ENCODE measurements at regions of chr17 and their contacts with region 1.

Region 1: DNA sequence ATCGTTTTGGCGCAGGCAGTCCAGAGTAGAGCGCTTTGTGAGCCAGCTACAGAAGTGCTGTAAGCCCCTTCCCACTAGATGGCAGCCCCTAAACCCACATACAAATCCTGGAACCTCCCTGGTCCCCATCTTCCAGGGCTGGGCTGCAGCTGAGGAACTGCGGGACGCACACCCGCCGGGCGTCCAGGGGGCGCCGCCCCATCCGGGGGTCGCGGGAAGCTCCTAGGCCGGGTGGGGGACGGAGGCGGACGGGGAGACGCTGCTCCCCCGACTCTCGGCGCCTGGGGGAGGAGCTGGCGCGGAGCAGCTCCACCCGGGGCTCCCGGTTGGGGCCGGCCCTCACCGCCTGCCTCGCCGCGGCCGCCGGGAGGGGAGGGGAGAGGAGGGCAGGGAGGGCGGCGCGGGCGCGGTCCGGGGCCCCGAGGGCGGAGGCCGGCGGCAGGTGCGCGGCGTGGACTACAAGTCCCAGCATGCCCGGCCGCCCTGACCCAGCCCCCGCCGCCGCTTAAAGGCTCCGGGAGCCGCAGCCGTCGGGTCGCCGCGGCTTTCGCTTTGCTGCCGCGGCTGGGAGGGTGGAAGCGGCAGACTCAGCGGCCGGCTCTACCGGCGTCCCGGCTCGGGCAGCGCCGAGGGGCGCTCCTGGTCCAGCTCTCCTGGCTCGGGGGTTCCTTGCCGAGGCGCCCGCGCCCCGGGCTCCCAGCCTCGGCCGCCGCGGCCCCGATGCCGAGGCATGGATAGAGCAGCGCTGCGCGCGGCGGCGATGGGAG is at the start of gene KSR1:
- DNase-seq: peak; percentile 41 to 63 (median 62)
- H3K4me3 ChIP-seq: peak within 1 kb of the TSS; percentile 54 to 89 (median 83)
- H3K4me3 Mint-ChIP-seq: peak within 1 kb of the TSS; percentile 93 to 97
- H3K27ac ChIP-seq: peak within 1 kb of the TSS; percentile 38 to 81
- H3K27ac Mint-ChIP-seq: peak within 1 kb of the TSS; percentile 73 to 90 (median 86)
- H3K4me1 ChIP-seq: peaks cover 19 to 23% of the 10 kb centered on the region in 2 donors
- H3K4me1 Mint-ChIP-seq: peaks cover 38% of the 10 kb centered on the region
- H3K27me3 ChIP-seq: no peaks in the 10 kb centered on the region
- H3K27me3 Mint-ChIP-seq: peaks cover 2 to 8% (median 5%) of the 10 kb centered on the region in 3 donors
- CTCF ChIP-seq: no peak
- polyA plus RNA-seq, gene KSR1: 1.2 to 111 (median 4.2) TPM

Region 2: DNA sequence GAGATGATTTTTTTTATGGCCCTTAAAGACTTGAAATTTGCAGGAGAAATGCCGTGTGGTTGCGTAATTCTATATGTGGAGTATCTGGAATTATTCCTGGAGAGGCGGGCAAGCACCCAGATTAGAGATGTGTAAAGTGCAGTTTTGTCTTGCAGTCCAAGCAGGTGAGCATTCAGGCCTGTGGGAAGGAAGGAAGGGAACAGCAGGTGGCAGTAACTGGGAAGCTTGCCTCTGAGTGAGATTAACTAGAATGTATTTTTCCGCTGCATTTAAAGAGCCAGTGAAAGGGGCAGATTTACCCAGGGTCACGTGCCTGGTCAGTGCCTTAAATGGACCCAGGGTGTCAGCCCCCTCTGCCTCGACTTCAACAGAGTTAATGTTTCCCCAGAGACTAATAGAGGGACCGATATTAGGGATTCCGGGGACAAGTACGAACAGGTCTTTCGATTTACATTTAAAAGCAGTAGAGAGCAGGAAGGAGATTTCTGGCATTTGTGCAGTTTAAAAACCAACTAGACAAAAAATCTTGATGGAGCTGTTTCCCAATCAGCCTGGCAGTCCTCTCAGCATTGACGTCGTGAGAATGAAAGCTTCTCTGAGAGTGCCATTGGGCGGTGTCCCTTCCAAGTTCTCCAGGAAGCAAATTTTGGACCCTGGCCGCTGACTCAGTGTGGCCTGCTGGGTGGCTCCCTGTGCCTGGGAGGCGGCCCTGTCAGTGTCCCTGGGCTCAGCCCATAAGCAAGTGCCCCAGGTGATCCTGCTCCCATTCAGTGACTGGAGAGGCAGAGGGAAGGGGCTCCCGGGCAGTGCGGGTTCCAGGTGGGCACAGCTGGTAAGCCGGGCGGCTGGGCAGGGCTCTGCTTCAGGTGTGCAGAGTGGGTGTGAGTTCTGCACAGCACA is 38.3 kb after region 1 on chr17:
- intact Hi-C with region 1: loop called in 1 of 2 experiments (anchors 5 kb)
- DNase-seq: peak; percentile 76 to 83 (median 78)
- H3K4me3 ChIP-seq: peak overlapping the region in 1 of 3 experiments; percentile 34
- H3K4me3 Mint-ChIP-seq: peak overlapping the region in 1 of 2 donors; percentile 75
- H3K27ac ChIP-seq: peak overlapping the region; percentile 77 to 81
- H3K27ac Mint-ChIP-seq: peak overlapping the region; percentile 91 to 96 (median 94)
- H3K4me1 ChIP-seq: peaks cover 49 to 62% of the 10 kb centered on the region in 2 donors
- H3K4me1 Mint-ChIP-seq: peaks cover 73% of the 10 kb centered on the region
- H3K27me3 ChIP-seq: no peaks in the 10 kb centered on the region
- H3K27me3 Mint-ChIP-seq: no peaks in the 10 kb centered on the region
- CTCF ChIP-seq: no peak

Measured in CD14-positive monocyte (primary cell).